Activated T-helper 1 cell treated with anti-CD3 and anti-CD28 coated beads, Interleukin-12 subunit alpha, Interleukin-12 subunit beta, Interleukin-2, Interleukin-4 antibody, amounts not matched to agents 30 ng/mL and 10 ng/mL and 1 ng/mL, durations not matched to agents 14 hours and 24 hours and 36 hours (primary cell): ENCODE measurements at regions of chrX and their contacts with region 1.

Region 1: GRCh38 chrX:18390941-18391538 is 34.4 kb upstream of the CDKL5 start:
- DNase-seq: peak; percentile 14
- H3K4me3 Mint-ChIP-seq: no peak overlapping the region
- H3K27ac Mint-ChIP-seq: no peak overlapping the region
- H3K4me1 Mint-ChIP-seq: peaks cover 6% of the 10 kb centered on the region
- H3K27me3 Mint-ChIP-seq: no peaks in the 10 kb centered on the region

Region 2: DNA sequence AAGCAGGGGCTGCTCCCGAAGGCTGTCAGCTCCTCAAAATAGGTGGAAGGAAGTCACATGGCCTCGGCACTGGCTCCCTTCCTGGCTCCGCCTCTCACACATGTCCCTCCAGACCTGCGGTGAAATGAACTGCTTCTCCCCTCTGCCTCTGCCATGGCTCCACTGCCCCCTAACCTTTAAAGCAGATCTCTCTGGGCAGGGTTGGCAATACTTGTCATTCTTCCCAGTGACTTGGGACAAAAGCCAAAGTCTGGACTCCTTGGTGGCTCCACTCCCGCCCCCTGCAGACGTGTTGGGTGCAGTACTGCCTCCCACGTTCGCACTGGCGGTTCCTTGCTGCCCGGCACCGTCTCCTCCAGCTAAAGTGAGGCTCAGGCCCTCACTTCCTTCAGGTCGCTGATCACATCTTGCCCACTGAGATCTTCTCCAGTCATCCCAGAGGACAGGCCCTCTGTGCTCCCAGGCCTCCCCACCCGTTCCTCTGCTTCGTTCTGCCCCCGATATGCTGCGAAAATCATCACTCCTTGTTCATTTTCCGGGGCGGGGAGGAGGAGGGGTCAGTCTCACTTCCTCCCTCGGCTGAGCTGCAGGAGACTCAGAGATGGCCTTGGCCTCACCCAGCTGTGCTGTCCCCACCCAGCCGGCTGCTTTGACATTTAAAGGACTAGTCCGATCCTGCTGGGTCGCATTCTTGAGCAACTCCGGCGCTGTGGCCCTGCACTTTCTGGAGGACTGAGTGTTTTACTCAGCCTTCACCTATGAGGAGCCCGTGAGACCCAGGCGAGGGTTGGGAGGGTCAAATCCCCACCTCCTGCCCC is 495.5 kb after region 1 on chrX:
- intact Hi-C with region 1: loop called (anchors 1 kb)
- DNase-seq: peak; percentile 12
- H3K4me3 Mint-ChIP-seq: peak overlapping the region; percentile 85
- H3K27ac Mint-ChIP-seq: peak overlapping the region; percentile 85
- H3K4me1 Mint-ChIP-seq: peaks cover 19% of the 10 kb centered on the region
- H3K27me3 Mint-ChIP-seq: peaks cover 2% of the 10 kb centered on the region

Region 3: GRCh38 chrX:18931972-18932371 is 540.9 kb after region 1 on chrX:
- intact Hi-C with region 1: loop called (anchors 5 kb)
- DNase-seq: no peak
- H3K4me3 Mint-ChIP-seq: no peak overlapping the region
- H3K27ac Mint-ChIP-seq: no peak overlapping the region
- H3K4me1 Mint-ChIP-seq: no peaks in the 10 kb centered on the region
- H3K27me3 Mint-ChIP-seq: no peaks in the 10 kb centered on the region